ENCODE measurements at regions of chr15 and their contacts with region 1.

Region 1: GRCh38 chr15:91302588-91303439 is 202.8 kb downstream of the SV2B start:
- DNase-seq: no peak
- H3K4me3 Mint-ChIP-seq: no peak overlapping the region
- H3K27ac Mint-ChIP-seq: no peak overlapping the region
- H3K4me1 Mint-ChIP-seq: peaks cover 6% of the 10 kb centered on the region
- H3K27me3 Mint-ChIP-seq: peaks cover 67% of the 10 kb centered on the region

Region 2: GRCh38 chr15:91007266-91007665 is 295.5 kb before region 1 on chr15:
- intact Hi-C with region 1: no loop called
- DNase-seq: no peak
- H3K4me3 Mint-ChIP-seq: no peak overlapping the region
- H3K27ac Mint-ChIP-seq: no peak overlapping the region
- H3K4me1 Mint-ChIP-seq: no peaks in the 10 kb centered on the region
- H3K27me3 Mint-ChIP-seq: no peaks in the 10 kb centered on the region

Region 3: GRCh38 chr15:91522663-91523332 is 220.0 kb after region 1 on chr15:
- intact Hi-C with region 1: loop called (anchors 5 kb)
- DNase-seq: no peak
- H3K4me3 Mint-ChIP-seq: no peak overlapping the region
- H3K27ac Mint-ChIP-seq: no peak overlapping the region
- H3K4me1 Mint-ChIP-seq: no peaks in the 10 kb centered on the region
- H3K27me3 Mint-ChIP-seq: peaks cover 11% of the 10 kb centered on the region

Region 4: GRCh38 chr15:91942676-91943576 is 640.1 kb after region 1 on chr15:
- intact Hi-C with region 1: loop called (anchors 10 kb)
- DNase-seq: peak; percentile 52
- H3K4me3 Mint-ChIP-seq: no peak overlapping the region
- H3K27ac Mint-ChIP-seq: peak overlapping the region; percentile 65
- H3K4me1 Mint-ChIP-seq: peaks cover 39% of the 10 kb centered on the region
- H3K27me3 Mint-ChIP-seq: no peaks in the 10 kb centered on the region

Region 5: DNA sequence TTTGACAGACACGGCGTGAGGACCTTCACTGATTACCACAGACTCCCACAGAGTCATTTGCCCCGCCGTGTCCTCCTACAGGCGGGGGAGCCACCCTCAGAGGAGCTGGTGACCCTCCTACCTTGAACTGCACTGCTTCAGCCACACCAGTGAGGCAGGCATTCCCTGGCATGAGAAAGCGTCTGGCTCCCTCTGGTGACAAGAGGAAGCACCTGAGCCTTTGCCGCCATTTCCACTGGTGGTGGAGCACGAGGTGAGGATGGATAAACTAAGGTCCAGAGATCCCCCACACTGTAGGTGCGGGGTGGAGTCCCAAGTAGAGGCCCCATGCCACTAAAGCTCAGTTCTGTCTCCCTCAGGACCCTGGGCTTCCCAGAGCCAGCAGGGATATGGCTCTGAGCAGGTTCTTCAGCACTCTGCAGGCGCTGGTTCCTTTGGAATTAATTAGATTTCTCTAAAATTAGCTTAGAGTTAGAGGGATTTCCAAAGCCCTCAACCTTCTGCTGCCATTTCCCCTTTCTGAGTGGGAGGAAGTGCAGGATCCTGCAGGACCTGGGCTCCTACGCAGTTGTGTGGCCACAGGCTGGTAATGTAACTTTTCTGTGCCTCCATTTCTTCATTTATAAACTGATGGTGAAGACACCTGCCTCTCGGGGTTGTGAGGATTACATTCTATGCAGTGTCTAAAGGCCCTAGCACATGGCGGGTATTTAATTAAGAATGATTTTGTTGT is 774.7 kb after region 1 on chr15:
- intact Hi-C with region 1: loop called (anchors 2 kb)
- DNase-seq: peak; percentile 37
- H3K4me3 Mint-ChIP-seq: no peak overlapping the region
- H3K27ac Mint-ChIP-seq: no peak overlapping the region
- H3K4me1 Mint-ChIP-seq: peaks cover 32% of the 10 kb centered on the region
- H3K27me3 Mint-ChIP-seq: no peaks in the 10 kb centered on the region